ENCODE measurements at regions of chr3 and their contacts with region 1.

Region 1: GRCh38 chr3:16448639-16449070 is 64.8 kb downstream of the RFTN1 start:
- DNase-seq: peak; percentile 78 to 88
- ATAC-seq: peak; percentile 93 to 99 (median 98)
- H3K4me3 ChIP-seq: no peak overlapping the region
- H3K27ac ChIP-seq: peak overlapping the region; percentile 50
- H3K4me1 ChIP-seq: peaks cover 20% of the 10 kb centered on the region
- H3K27me3 ChIP-seq: no peaks in the 10 kb centered on the region
- CTCF ChIP-seq: no peak

Region 2: DNA sequence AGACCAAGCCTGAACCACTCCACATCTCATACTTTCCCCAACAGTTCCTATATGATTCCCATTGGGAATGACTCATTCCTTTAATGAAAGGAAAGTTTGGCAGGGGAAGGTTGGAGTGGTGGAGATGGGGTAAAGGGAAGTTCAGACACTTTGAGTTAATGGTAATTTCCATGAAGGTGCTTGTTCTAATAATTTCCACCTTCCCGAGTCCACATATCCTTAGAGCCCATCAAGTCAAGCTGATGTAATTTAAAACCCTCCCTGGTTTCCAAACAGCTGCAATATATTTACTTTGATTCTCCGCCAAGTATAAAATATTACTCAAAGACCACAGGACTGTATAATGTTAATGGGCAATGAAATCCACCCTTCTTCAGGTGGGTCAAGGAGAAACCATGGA is 369.1 kb before region 1 on chr3:
- intact Hi-C with region 1: no loop called
- DNase-seq: no peak
- ATAC-seq: no peak
- H3K4me3 ChIP-seq: no peak overlapping the region
- H3K27ac ChIP-seq: no peak overlapping the region
- H3K4me1 ChIP-seq: no peaks in the 10 kb centered on the region
- H3K27me3 ChIP-seq: no peaks in the 10 kb centered on the region
- CTCF ChIP-seq: no peak

Region 3: GRCh38 chr3:16419640-16420241 is 28.9 kb before region 1 on chr3:
- intact Hi-C with region 1: loop called in 1 of 2 experiments (anchors 5 kb)
- DNase-seq: no peak
- ATAC-seq: no peak
- H3K4me3 ChIP-seq: no peak overlapping the region
- H3K27ac ChIP-seq: no peak overlapping the region
- H3K4me1 ChIP-seq: peaks cover 15% of the 10 kb centered on the region
- H3K27me3 ChIP-seq: no peaks in the 10 kb centered on the region
- CTCF ChIP-seq: no peak